GM10248 (cell line): ENCODE measurements at regions of chr11 and their contacts with region 1.

Region 1: GRCh38 chr11:61309739-61310138 is 14.6 kb upstream of the VWCE start:
- DNase-seq: no peak
- CTCF ChIP-seq: no peak

Region 2: GRCh38 chr11:61287338-61287977 is 22.3 kb before region 1 on chr11:
- CTCF ChIA-PET with region 1: no interaction called
- POLR2A ChIA-PET with region 1: no interaction called
- DNase-seq: no peak
- CTCF ChIP-seq: no peak

Region 3: GRCh38 chr11:61325649-61326414 is 16.1 kb after region 1 on chr11:
- CTCF ChIA-PET with region 1: interaction called, 10 read pairs
- POLR2A ChIA-PET with region 1: interaction called, 10 read pairs
- DNase-seq: no peak
- CTCF ChIP-seq: no peak